ENCODE measurements at regions of chr6 and their contacts with region 1.

Region 1: DNA sequence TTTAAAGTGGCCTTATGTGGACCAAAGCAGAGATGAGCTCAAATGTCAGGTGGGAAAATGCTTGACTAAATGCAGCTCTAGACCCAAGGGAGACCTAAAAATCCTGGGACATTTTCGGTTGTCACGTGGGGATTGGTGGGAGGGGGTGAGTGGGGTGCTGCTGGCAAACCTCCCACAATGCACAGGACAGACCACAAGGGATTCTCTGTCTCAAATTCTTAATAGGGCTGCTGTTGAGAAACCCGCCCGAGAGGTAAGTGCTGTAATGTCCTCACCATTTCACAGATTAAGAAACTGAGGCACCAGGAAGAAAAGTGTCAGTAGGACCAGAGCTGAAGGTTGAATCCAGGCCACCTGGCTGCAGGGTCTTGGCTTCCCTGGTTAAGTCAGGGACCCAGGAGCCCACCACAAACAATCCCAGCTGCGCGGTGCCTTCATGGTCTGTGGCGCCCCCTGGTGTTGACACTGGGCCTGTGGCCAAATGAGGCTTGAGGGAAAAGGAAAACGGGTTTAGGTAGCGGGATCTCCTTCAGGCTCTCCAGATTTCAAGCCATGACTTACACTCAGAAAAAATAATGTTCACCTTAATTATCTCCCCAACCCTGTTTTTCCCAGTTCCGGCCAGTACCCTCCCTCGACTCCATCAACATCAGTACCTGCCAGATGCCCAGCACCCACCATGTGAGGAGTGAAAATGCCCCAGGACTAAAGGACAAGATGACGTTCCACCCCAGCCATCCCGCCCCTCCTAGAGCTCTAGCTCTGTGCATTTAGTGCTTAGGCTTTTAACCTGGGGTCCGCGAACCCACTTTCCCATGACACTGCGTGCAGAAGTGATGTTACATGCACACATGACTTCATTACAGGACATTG is 7.2 kb downstream of the HLA-G start:
- DNase-seq: no peak

Region 2: DNA sequence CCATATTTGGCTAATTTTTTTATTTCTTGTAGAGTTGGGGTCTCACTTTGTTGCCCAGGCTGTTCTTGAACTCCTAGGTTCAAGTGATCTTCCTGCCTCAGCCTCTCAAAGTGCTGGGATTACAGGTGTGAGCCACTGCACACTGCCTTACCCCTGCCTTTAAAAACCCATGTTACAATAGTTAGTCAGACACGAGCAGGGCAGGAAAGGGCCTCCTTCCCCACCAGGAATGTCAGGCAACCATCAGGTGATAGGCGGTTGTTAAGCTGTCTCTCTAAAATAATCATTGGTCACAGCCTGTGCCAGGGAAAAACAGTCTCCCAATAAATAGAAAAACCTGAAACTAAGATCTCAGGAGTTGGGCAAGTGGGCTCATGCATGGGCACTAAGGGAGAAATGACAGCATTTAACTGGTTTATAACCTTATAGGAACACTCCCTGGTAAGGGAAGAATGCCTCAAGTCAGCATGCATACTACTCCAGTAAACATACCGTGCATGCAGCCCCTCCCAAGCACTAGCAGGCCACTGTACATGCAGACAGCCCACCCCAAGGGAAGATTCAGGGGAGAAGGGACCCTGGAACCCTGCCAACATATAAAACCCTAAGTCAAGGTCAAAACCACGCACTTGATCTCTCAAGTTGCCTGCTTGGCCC is 241.5 kb before region 1 on chr6:
- intact Hi-C with region 1: no loop called
- DNase-seq: no peak

Region 3: DNA sequence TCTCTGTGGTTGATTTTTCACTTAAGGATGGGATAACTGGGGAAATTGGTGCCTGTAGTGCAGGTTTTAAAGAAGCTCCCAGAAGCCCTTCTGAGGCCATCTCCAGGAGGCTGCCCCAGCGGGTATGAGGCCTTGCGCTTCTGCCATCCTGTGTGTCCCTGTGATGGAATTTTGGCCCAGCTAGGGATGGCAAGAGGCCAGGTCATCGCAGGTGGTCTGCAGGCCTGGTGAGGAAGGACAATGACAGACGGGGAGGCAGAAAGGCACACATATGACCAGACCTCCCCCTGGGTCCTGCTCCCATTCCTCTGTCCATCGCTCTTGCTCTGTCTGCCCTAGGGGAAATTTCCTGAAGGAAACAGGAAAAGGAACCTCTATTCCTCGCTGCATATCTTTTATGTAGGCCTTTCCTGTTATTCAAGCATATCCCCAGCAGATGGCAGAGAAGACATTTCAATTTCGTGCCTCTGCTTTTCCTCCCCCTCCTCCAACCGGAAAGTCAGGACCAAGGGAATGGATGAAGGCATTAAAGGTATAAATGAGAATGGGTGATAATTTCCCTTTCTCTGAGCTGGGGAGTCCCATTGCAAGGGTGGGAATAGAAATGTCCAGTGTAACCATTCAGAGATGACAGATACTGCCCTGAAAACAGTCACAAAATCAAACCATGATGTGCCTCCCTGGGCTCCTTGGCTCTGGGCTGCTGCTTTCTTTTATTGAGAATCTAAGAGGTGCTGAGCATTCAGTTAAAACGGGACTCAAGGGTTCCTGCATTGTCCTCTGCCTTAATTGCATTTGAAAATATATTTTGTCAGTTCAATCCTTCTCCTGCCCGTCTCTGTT is 129.2 kb before region 1 on chr6:
- intact Hi-C with region 1: loop called (anchors 2 kb)
- DNase-seq: no peak

Region 4: GRCh38 chr6:29737707-29738630 is 96.8 kb before region 1 on chr6:
- intact Hi-C with region 1: loop called (anchors 1 kb)
- DNase-seq: peak; percentile 81

Region 5: DNA sequence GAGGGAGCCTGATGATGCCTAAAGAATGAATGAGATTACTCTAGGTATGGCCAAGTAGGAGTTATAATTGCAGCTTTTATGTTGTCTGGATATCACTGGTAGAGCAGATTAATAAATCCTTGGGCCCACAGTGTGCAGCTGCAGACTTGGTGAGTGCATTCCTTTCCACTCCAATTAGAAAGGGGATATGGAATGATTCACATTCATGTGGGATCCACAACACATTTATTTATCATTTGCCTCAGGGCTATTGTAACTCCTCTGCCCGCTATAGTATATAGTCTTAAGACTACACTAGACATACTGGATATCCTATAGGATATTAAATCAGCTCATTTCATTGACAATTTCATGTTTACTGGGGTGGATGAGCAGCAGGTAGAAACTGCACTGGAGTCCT is 18.8 kb before region 1 on chr6:
- intact Hi-C with region 1: no loop called
- DNase-seq: no peak